Activated CD4-positive, alpha-beta memory T cell treated with anti-CD3 and anti-CD28 coated beads, Interleukin-2, amount 10 ng/mL, durations not matched to agents 7 days and 5 days (primary cell): ENCODE measurements at regions of chr19 and their contacts with region 1.

Region 1: DNA sequence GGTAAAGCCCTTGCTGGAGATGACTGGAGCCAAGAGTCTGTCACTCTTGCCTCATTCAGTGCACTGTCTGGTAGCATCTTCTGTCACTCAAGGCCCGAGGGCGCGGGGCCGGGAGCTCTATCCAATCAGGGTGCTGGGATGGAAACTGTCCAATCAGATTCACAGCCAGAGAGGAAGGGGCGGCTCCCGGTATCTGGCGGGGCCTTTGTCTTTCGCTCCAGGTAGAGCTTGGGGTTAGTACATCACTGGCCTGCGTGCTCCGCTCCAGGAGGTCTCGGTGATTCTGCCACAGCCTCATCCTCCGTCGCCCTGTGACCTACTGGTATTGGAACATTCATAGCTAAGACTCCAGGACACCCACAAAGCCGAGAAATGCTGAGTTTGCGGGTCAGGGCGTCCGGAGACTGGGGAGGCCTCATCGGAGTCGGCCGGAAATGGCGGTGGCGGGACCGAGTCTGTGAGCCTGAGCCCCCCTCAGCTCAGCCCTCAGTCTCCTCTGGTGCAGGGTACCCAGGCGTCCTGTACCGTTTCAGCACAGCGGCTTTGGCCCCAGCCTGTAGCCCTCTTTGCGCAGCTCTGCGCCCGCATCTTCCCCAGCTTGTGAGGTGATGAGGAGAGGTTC is 20.6 kb upstream of the ZNF430 start:
- DNase-seq: peak; percentile 88
- H3K4me3 Mint-ChIP-seq: peak overlapping the region; percentile 85
- H3K27ac Mint-ChIP-seq: peak overlapping the region; percentile 79
- H3K4me1 Mint-ChIP-seq: peaks cover 20% of the 10 kb centered on the region
- H3K27me3 Mint-ChIP-seq: no peaks in the 10 kb centered on the region

Region 2: DNA sequence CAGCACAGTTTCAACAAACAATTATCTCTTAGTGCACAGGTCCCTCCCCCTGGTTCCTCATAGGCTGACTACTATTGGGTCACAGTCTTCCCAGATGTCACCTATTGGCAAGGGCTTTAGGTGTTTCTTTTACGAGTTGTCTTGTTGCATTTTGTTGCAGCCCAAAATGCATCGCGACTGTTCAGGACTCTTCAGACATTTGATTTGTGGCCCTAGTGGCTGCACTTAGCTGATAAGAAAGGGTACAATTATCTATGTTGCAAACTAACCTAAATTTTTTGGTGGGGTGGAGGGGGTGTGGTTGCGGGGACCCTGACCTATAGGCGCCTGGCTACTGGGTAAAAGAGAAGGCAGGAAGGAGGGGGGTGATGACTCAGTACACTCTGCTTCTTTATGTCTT is 53.1 kb after region 1 on chr19:
- CTCF ChIA-PET with region 1: no interaction called
- POLR2A ChIA-PET with region 1: no interaction called
- DNase-seq: no peak
- H3K4me3 Mint-ChIP-seq: no peak overlapping the region
- H3K27ac Mint-ChIP-seq: no peak overlapping the region
- H3K4me1 Mint-ChIP-seq: no peaks in the 10 kb centered on the region
- H3K27me3 Mint-ChIP-seq: no peaks in the 10 kb centered on the region

Region 3: DNA sequence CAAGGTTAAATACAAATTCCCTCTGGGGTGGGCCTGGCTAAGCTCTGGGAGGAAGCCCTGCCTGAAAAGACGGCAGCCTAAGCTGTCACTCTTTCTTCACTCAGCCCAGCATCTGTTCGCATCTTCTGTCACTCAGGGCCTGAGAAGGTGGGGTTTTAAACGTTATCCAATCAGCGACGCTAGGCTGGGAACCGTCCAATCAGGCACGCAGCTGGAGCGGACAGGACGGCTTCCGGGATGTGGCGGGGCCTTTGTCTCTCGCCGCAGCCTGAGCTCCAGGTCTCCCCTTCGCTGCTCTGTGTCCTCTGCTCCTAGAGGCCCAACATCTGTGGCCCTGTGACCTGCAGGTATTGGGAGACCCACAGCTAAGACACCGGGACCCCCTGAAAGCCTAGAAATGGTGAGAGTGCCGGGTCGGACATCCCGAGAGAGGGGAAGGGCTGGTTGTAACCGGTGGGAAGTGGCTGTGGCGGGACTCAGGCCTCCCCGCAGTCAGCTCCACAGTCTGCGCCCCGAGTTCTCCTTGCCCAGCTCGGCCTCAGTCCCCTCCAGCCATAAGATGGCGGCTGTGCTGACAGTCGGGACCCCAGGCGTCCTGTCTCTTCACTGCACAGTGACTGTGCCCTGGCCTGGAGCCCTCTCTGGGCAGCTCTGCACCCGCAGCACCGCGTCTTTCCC is 142.1 kb after region 1 on chr19 and contains the start of gene ZNF431:
- CTCF ChIA-PET with region 1: no interaction called
- POLR2A ChIA-PET with region 1: interaction called, 14 read pairs
- DNase-seq: peak; percentile 93
- H3K4me3 Mint-ChIP-seq: peak within 1 kb of the TSS; percentile 96
- H3K27ac Mint-ChIP-seq: peak within 1 kb of the TSS; percentile 91
- H3K4me1 Mint-ChIP-seq: peaks cover 22% of the 10 kb centered on the region
- H3K27me3 Mint-ChIP-seq: no peaks in the 10 kb centered on the region
- total RNA-seq, gene ZNF431: 16.1 to 20.5 TPM